ENCODE measurements at regions of chr14 and their contacts with region 1.

Region 1: GRCh38 chr14:106372870-106373652 is 846.7 kb downstream of the TMEM121 start:
- DNase-seq: peak; percentile 88
- ATAC-seq: peak; percentile 97
- H3K4me3 Mint-ChIP-seq: no peak overlapping the region
- H3K27ac Mint-ChIP-seq: peak overlapping the region; percentile 26
- H3K4me1 Mint-ChIP-seq: peaks cover 30% of the 10 kb centered on the region
- H3K27me3 Mint-ChIP-seq: peaks cover 19% of the 10 kb centered on the region

Region 2: DNA sequence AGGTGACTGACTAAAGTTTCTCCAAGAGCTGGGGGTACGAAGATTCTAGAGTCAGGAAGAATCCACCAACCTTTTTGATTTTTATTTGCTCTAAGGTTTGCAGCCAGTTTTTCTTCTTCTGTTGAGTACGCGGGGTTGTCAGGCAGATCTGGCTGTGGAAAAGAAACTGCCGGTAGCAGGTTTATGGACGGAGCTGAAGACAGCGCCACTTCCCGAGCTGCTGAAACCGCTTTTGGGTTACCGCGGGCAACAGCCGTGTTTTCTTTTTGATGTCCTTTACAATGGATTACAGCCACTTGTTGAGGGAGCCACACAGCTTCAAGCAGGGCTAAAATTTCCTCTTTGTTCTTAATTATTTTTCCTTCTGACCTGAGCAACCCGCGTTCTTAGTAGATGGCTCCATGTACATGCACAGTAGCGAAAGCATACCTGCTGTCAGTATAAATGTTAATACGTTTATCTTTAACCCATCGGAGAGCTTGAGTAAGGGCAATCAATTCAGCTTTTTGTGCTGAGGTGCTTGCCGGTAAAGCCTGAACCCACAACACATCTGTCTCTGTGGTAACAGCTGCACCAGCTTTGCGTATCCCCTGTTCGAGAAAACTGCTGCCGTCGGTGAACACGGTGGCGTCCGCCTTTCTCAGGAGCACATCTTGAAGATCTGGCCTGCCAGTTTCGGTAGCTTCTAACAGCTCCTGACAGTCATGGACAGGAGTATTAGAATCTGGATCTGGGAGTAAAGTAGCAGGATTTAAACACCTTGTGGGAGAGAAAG is 172.3 kb before region 1 on chr14:
- CTCF ChIA-PET with region 1: no interaction called
- POLR2A ChIA-PET with region 1: no interaction called
- DNase-seq: peak; percentile 44
- ATAC-seq: peak; percentile 63
- H3K4me3 Mint-ChIP-seq: peak overlapping the region; percentile 48
- H3K27ac Mint-ChIP-seq: peak overlapping the region; percentile 46
- H3K4me1 Mint-ChIP-seq: peaks cover 18% of the 10 kb centered on the region
- H3K27me3 Mint-ChIP-seq: peaks cover 24% of the 10 kb centered on the region

Region 3: DNA sequence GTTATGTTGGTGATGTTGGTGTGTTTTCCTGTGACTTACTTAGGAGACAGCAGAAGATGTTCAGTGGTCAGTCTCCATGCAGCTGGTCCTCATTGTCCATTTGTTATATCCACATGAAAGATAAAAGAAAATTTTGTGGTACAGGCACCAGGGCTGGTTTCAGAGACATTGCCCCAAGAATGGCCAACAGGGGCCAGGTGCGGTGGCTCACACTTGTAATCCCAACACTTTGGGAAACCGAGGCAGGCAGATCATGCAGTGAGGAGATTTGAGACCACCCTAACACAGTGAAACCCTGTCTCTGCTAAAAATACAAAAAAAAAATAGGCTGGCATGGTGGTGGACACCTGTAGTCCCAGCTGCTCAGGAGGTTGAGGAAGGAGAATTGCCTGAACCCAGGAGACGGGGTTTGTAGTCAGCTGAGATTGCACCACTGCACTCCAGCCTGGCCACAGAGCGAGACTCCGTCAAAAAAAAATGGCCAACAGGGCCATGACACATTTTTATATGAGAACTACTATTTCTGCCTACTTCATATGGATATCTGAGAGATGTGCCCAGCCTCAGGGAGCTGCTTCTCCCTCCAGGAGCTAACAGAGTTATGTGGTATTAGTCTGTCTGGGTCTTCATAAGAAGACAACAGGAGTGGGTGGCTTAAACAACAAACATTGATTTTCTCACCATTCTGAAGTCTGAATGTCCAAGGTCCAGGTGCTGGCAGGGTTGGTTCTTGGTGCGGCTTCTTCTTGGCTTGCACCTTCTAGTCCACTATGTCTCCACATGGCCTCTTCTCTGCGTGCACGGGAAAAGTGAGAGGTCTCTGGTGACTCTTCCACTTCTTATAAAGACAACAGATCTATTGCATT is 24.9 kb before region 1 on chr14:
- CTCF ChIA-PET with region 1: interaction called, 31 read pairs
- POLR2A ChIA-PET with region 1: no interaction called
- DNase-seq: no peak
- ATAC-seq: no peak
- H3K4me3 Mint-ChIP-seq: no peak overlapping the region
- H3K27ac Mint-ChIP-seq: no peak overlapping the region
- H3K4me1 Mint-ChIP-seq: peaks cover 16% of the 10 kb centered on the region
- H3K27me3 Mint-ChIP-seq: peaks cover 39% of the 10 kb centered on the region

Region 4: DNA sequence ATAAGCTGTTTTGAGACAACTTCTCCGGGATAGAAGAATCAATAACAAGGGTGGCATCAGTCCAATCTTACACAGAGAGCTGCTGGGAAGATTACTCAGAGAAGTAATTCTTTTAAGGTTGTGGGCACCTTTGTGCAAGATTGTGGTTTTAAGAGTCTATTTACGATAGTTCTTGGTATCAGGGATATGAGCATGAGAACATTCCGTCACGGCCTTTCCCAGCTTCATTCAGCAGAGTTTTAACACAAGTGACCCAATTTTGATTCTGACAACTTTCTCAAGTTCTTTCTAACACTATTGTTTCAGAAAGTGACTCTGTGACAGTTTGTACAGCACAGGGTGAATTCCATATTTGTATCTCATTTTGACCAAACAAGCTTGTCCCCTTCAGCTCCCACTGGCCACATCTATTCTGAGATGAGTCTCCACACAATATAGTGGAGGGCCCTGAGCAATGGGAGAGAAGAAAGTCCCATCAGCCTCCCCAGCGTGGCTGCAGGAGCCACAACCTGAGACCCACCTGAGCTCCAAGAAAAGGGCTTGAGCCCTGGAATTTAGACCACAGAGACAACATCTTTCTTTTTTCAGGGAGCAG is 22.5 kb after region 1 on chr14:
- CTCF ChIA-PET with region 1: interaction called, 10 read pairs
- POLR2A ChIA-PET with region 1: no interaction called
- DNase-seq: no peak
- ATAC-seq: no peak
- H3K4me3 Mint-ChIP-seq: peak overlapping the region; percentile 53
- H3K27ac Mint-ChIP-seq: peak overlapping the region; percentile 73
- H3K4me1 Mint-ChIP-seq: peaks cover 45% of the 10 kb centered on the region
- H3K27me3 Mint-ChIP-seq: peaks cover 20% of the 10 kb centered on the region

Region 5: GRCh38 chr14:106436310-106436905 is 63.3 kb after region 1 on chr14:
- CTCF ChIA-PET with region 1: no interaction called
- POLR2A ChIA-PET with region 1: no interaction called
- DNase-seq: no peak
- ATAC-seq: no peak
- H3K4me3 Mint-ChIP-seq: no peak overlapping the region
- H3K27ac Mint-ChIP-seq: no peak overlapping the region
- H3K4me1 Mint-ChIP-seq: no peaks in the 10 kb centered on the region
- H3K27me3 Mint-ChIP-seq: no peaks in the 10 kb centered on the region

Measured in activated CD8-positive, alpha-beta T cell treated with anti-CD3 and anti-CD28 coated beads, Interleukin-2, amount 10 ng/mL, durations not matched to agents 7 days and 5 days (primary cell).